Esophagus muscularis mucosa (tissue), 4 donors: ENCODE measurements at regions of chr18 and their contacts with region 1.

Region 1: GRCh38 chr18:50559752-50560680 is at the start of gene MAPK4:
- DNase-seq: no peak
- H3K4me3 ChIP-seq: peak within 1 kb of the TSS; percentile 67 to 82 (median 74)
- H3K27ac ChIP-seq: peak within 1 kb of the TSS; percentile 80 to 87 (median 84)
- H3K4me1 ChIP-seq: peaks cover 9 to 36% (median 31%) of the 10 kb centered on the region in 4 donors
- H3K27me3 ChIP-seq: peaks cover 0 to 24% (median 0%) of the 10 kb centered on the region in 4 donors
- CTCF ChIP-seq: no peak
- EP300 ChIP-seq: no peak
- POLR2A ChIP-seq: no peak
- total RNA-seq, gene MAPK4: 6.2 to 14.5 (median 9.6) TPM

Region 2: GRCh38 chr18:50662177-50662576 is 102.2 kb after region 1 on chr18:
- intact Hi-C with region 1: loop called (anchors 5 kb)
- DNase-seq: no peak
- H3K4me3 ChIP-seq: no peak overlapping the region
- H3K27ac ChIP-seq: peak overlapping the region in 1 of 4 donors; percentile 39
- H3K4me1 ChIP-seq: peaks cover 25 to 39% (median 33%) of the 10 kb centered on the region in 4 donors
- H3K27me3 ChIP-seq: no peaks in the 10 kb centered on the region
- CTCF ChIP-seq: peak in 1 of 3 experiments; percentile 20
- EP300 ChIP-seq: no peak
- POLR2A ChIP-seq: no peak

Region 3: DNA sequence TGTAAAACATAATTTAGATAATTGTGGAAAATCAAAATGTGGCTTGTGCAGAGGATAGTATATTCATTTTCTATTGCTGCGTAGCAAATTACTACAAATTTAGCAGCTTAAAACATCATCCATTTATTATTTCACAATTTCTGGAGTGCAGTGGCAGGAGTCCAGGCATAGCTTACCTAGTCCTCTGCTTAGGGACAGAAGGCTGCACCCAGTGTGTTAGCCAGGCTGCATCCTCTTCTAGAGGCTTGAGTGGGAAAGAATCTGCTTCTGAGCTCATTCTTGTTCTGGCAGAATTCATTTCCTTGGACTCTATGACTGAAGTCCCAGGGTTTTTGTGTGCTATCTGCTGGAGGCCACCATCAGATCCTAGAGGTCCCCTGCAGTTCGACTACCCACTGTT is 220.1 kb after region 1 on chr18:
- intact Hi-C with region 1: loop called (anchors 5 kb)
- DNase-seq: peak; percentile 24
- H3K4me3 ChIP-seq: no peak overlapping the region
- H3K27ac ChIP-seq: no peak overlapping the region
- H3K4me1 ChIP-seq: no peaks in the 10 kb centered on the region
- H3K27me3 ChIP-seq: no peaks in the 10 kb centered on the region
- CTCF ChIP-seq: no peak
- EP300 ChIP-seq: no peak
- POLR2A ChIP-seq: no peak